Activated CD4-positive, alpha-beta T cell treated with anti-CD3 and anti-CD28 coated beads for 36 hours (primary cell): ENCODE measurements at regions of chr3 and their contacts with region 1.

Region 1: DNA sequence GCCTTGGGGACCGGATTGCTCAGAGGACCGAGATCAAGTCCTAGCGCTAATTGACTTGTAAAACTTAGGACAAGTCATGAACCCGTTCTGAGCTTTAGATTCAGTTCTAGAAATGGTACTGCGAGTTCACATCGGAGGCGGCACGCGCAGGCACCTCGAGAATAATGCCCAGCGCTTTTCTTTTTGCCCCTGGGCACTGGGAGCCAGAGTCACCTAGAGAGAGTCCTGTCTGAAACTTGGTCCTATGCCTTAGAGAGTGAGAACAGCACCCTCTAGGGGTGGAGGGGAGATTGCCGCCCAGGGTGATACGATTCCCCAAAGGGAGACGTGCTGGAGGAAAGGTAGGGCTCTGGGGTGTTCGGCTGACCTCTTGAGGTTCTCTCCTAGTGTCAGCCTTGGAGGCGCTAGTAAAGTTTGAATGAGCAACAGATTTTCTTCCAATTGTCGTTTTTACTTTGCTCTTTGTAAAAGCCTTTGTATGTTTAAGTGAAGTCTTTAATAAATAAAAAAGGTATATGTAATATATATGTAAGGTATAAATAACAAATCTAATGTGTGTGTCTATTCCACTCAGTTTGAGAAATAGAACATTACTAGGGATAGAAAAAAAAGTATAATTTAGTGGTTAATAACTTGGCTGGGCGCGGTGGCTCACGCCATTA is 826 bp downstream of the EEF1AKMT4 start:
- DNase-seq: peak; percentile 95
- ATAC-seq: peak; percentile 72
- H3K4me3 Mint-ChIP-seq: peak overlapping the region; percentile 98
- H3K27ac Mint-ChIP-seq: peak overlapping the region; percentile 99
- H3K4me1 Mint-ChIP-seq: peaks cover 9% of the 10 kb centered on the region
- H3K27me3 Mint-ChIP-seq: no peaks in the 10 kb centered on the region

Region 2: DNA sequence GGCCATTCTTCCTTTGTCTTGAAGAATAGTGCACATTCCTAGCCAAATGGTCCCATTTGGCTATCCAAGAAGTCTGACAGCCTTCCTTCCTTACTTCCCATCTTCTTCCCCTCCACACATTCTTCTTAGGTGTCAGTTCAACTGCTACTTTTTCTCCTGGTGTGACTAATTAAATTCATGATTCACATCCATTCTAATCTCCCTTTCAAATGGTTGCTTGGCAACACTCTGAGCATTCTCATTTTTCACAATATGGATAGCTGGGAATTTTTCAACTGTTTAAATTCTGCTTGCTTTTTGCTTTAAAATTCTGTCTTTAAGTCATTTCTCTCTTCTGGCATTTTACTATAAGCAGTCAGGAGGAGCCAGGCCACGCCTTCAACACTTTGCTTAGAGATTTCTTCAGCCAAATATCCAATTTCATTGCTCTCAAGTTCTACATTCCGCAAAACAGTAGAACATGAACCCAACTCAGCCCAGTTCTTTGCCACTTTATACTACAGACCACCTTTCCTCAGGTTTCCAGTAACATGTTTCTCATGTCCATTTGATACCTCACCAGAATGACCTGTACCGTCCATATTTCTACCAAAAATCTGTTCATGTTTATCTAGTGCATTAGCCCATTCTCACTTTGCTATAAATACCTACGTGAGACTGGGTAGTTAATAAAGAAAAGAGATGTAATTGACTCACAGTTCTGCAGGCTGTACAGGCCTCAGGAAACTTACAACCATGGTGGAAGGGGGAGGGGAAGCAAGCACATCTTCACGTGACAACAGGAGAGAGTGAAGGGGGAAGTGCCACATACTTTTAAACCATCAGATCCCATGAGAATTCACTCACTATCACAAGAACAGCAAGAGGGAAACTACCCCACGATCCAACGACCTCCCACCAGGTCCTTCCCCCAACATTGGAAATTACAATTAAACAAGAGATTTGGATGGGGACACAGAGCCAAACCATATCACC is 789.9 kb before region 1 on chr3:
- CTCF ChIA-PET with region 1: no interaction called
- POLR2A ChIA-PET with region 1: no interaction called
- intact Hi-C with region 1: loop called in 1 of 2 experiments (anchors 10 kb)
- DNase-seq: no peak
- ATAC-seq: no peak
- H3K4me3 Mint-ChIP-seq: no peak overlapping the region
- H3K27ac Mint-ChIP-seq: no peak overlapping the region
- H3K4me1 Mint-ChIP-seq: no peaks in the 10 kb centered on the region
- H3K27me3 Mint-ChIP-seq: no peaks in the 10 kb centered on the region

Region 3: DNA sequence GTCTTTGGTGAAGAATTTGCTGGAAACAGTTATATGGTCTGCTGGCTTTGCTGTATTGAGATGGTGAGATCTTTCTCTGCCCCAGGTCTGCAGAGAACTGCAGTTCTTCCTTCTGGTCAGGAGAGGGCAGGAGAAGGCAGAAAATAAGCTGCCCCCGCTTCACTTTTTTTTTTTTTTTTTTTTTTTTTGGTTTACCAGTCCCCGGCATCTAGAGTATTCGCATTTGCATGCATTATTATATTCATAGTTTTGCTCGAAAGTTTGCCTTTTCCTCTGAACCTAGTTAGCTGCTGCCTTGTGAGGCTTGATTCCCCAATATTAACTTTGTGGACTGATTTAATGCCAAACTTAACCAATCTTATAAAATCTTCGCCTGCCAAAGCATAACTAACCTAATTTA is 355.0 kb before region 1 on chr3:
- CTCF ChIA-PET with region 1: interaction called, 4 read pairs
- POLR2A ChIA-PET with region 1: no interaction called
- intact Hi-C with region 1: loop called in 1 of 2 experiments (anchors 1 kb)
- DNase-seq: peak; percentile 38
- ATAC-seq: peak; percentile 59
- H3K4me3 Mint-ChIP-seq: no peak overlapping the region
- H3K27ac Mint-ChIP-seq: no peak overlapping the region
- H3K4me1 Mint-ChIP-seq: no peaks in the 10 kb centered on the region
- H3K27me3 Mint-ChIP-seq: peaks cover 7% of the 10 kb centered on the region

Region 4: DNA sequence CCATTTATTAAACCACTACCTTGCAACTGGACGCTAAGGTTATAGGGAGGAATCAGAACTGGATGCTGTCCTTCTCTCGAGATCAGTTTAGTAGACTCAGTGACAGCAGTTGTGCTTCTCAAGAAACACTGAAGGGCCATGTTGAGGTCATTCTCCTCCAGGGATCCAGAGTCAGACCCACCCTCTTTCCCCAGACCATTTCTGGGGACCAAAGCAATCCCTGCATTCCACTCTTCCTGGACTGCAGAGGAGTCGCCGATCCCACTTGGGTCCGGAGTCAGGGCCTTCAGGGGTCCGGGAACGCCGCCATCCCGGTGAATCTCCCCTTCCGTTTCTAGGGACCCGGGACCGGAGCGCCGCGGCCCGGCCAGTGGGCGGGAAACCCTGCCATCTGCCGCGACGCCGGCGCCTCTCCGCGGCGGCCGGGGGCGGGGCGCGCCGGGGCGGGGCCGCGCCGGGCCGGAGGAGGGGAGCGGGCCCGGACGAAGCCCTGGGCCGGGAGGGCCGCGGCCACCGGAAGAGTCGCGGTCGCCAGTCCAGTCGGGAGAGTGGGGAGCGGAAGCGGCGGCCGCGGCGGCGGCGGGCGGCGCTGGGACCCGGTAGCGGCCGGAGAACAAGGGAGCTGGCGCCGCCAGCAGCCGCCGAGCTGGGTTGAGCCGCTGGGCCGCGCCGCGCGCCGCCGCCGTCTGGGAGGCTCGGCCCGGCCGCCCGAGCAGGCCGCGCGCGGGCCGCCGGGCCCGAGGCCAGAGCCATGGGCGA is 95.2 kb before region 1 on chr3 and contains the start of gene DVL3:
- CTCF ChIA-PET with region 1: interaction called, 3 read pairs
- POLR2A ChIA-PET with region 1: no interaction called
- intact Hi-C with region 1: loop called in 1 of 2 experiments (anchors 1 kb)
- DNase-seq: peak; percentile 61
- ATAC-seq: peak; percentile 71
- H3K4me3 Mint-ChIP-seq: peak within 1 kb of the TSS; percentile 97
- H3K27ac Mint-ChIP-seq: peak within 1 kb of the TSS; percentile 80
- H3K4me1 Mint-ChIP-seq: peaks cover 23% of the 10 kb centered on the region
- H3K27me3 Mint-ChIP-seq: no peaks in the 10 kb centered on the region
- total RNA-seq, gene DVL3: 24.9 to 29.6 TPM

Region 5: DNA sequence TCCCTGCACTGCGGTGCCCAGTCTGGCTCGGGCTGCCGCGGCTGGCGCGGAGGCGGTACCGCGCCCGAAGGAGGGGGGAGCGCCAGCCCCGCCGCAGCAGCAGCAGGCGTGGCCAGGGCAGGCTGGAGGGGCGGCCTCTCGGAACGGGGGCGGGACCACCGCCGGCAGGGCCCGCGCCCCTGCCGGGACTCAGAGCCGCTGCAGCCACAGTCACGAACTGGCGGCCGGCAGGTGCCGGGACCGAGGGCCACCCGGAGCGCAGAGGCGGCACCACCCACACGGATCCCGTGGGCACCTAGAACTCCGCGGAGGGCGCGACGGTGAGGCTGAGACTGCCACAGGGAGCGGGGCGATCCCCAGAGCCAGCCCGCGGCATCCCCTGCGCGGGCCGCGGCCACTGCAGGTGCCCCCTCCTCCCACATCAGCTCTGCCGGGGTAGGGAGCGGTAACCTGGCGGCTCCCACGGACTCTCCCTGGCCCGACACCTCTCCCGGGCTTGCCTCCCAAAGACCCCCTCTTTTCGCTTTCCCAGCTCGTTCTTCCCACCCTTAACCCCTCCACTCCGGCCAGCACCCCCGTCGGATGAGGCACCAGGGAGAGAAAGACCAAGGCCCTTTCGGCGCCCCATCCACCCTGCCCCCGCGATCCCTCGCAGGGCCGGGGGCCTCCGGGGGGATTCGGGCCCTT is 20.8 kb before region 1 on chr3 and contains the start of gene VWA5B2:
- CTCF ChIA-PET with region 1: interaction called, 33 read pairs
- POLR2A ChIA-PET with region 1: interaction called, 9 read pairs
- intact Hi-C with region 1: loop called (anchors 1 kb)
- DNase-seq: peak; percentile 78
- ATAC-seq: peak; percentile 93
- H3K4me3 Mint-ChIP-seq: peak within 1 kb of the TSS; percentile 56
- H3K27ac Mint-ChIP-seq: no peak within 1 kb of the TSS
- H3K4me1 Mint-ChIP-seq: peaks cover 6% of the 10 kb centered on the region
- H3K27me3 Mint-ChIP-seq: peaks cover 50% of the 10 kb centered on the region
- total RNA-seq, gene VWA5B2: not detected

Region 6: DNA sequence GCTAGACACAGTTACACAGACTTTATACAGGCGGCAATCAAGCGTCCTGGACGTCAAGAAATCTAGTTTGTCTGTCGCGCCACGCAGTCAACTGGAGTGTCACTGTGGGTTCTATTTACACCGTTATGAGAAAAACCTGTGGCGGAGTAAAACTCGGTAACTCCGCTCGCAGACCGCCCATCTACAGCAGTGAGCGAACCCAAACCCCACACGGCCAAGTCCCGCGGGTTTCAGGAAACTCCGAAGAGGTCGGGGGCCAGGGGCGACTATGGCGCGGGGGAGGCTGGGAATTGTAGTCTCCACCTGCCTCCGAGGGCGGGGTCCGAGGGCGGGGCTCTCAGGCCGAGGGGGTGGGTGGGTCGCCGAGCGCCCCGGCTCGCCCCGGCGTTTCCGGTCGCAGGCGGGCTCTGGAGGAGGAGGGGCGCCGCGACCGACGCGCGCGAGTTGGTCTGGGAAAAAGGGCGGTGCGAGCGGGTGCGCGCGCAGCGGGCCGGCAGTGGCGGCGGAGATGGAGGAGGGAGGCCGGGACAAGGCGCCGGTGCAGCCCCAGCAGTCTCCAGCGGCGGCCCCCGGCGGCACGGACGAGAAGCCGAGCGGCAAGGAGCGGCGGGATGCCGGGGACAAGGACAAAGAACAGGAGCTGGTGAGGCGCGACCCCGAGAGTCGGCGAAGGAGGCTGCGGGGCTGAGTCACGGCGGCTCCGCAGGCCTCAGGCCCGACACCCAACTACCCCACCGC is 48.6 kb after region 1 on chr3 and contains the start of gene PSMD2:
- CTCF ChIA-PET with region 1: interaction called, 10 read pairs
- POLR2A ChIA-PET with region 1: no interaction called
- intact Hi-C with region 1: loop called (anchors 1 kb)
- DNase-seq: peak; percentile 99
- ATAC-seq: peak; percentile 96
- H3K4me3 Mint-ChIP-seq: peak within 1 kb of the TSS; percentile 84
- H3K27ac Mint-ChIP-seq: peak within 1 kb of the TSS; percentile 81
- H3K4me1 Mint-ChIP-seq: peaks cover 19% of the 10 kb centered on the region
- H3K27me3 Mint-ChIP-seq: no peaks in the 10 kb centered on the region
- total RNA-seq, gene PSMD2: 207 to 236 TPM

Region 7: DNA sequence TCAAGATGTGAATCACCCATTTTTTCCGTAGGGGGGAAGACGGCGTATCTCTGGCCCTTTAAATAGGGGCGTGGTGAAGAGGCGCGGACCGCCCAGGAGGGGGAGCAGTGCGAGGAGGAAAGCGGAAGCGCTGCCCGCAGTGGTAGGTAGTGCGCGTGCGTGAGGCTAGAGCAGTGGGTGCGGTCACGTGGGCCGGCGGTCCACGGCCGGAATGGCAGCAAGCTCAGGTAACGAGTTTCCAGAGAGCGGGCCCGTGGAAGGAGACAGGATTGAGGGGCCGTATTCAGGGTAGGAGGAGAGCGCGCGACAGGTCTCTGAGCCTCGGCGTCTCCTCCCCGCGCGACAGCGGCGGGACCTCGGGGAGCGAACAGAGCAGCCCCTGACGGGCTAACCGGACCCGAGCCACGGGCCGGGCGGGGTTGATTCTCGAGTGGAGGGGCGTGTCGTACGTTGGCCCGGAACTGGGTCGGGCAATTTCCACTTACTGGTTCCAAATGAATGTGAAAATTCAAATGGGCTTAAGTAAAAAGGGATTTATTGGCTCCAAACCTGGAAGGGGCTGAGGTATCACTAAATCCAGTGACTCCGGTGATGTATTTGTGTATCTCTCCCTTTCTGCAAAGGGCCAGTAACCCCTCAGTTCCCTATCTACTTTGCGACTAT is 561.8 kb after region 1 on chr3 and contains the start of gene VPS8:
- CTCF ChIA-PET with region 1: interaction called, 3 read pairs
- POLR2A ChIA-PET with region 1: no interaction called
- intact Hi-C with region 1: loop called in 1 of 2 experiments (anchors 1 kb)
- DNase-seq: peak; percentile 97
- ATAC-seq: peak; percentile 82
- H3K4me3 Mint-ChIP-seq: peak within 1 kb of the TSS; percentile 97
- H3K27ac Mint-ChIP-seq: peak within 1 kb of the TSS; percentile 94
- H3K4me1 Mint-ChIP-seq: peaks cover 48% of the 10 kb centered on the region
- H3K27me3 Mint-ChIP-seq: no peaks in the 10 kb centered on the region
- total RNA-seq, gene VPS8: 24.7 to 33.9 TPM